ENCODE measurements at regions of chr20 and their contacts with region 1.

Region 1: DNA sequence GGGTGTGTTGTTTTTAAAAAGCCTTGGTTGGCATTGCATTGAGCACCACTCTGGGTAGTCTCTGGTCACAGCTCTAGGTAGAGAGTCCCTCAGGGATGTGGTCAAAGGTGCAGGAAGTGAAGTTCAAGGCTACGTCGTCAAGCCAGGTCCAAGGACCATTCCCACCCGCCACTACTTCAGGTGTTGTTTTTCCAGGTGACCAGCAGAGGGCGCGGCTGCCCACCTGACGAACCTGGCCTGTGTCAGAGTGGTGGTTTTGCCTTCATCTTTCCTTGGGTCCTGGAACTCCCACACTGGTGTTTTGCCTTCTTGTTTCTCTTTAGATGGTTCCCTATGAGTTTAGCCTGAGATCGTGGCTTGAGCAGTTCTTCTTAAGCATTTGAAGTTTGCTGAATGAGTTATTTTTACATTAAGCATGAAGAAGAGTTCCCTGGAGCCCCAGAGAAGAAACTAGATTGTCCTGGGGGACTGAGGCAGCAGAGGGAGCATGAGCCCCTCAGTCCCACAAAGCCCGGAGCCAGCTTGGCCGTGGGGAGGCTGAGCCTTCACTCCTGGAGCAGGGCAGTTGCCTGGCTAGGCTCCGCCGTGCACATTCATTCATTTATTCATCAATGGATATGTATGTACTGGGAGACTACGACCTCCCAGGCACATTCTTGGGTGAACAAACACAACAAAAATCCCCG is 5.6 kb upstream of the PHACTR3 start:
- DNase-seq: peak; percentile 42 to 71
- ATAC-seq: peak; percentile 73 to 94; a peak in 5 of 6 replicates
- H3K4me3 ChIP-seq: no peak overlapping the region
- H3K27ac ChIP-seq: no peak overlapping the region
- H3K4me1 ChIP-seq: no peaks in the 10 kb centered on the region
- CTCF ChIP-seq: peak; percentile 74
- EP300 ChIP-seq: no peak
- POLR2A ChIP-seq: no peak
- RAD21 ChIP-seq: peak; percentile 70 to 82

Region 2: DNA sequence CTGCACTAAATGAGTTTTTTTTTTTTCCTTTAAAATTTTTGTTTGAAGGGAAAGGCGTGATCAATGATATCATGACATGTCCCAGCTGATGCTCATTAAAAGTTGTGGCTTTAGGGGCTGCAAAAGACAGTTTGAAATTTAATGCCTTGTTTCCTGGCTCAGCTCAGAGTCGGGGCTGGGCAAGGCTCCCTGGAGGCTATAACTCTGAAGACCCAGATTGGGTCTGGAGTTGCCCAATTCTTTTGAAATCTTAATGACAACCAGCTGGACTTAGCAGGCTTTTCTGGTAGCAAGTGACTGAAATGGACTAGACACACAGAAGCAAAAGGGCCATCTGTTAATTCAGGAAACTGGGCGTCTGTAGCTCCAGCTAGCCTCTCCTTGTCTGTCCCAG is 18.2 kb before region 1 on chr20:
- CTCF ChIA-PET with region 1: interaction called, 19 read pairs
- POLR2A ChIA-PET with region 1: no interaction called
- DNase-seq: no peak
- ATAC-seq: no peak
- H3K4me3 ChIP-seq: no peak overlapping the region
- H3K27ac ChIP-seq: no peak overlapping the region
- H3K4me1 ChIP-seq: no peaks in the 10 kb centered on the region
- CTCF ChIP-seq: no peak
- EP300 ChIP-seq: no peak
- POLR2A ChIP-seq: no peak
- RAD21 ChIP-seq: no peak

Region 3: DNA sequence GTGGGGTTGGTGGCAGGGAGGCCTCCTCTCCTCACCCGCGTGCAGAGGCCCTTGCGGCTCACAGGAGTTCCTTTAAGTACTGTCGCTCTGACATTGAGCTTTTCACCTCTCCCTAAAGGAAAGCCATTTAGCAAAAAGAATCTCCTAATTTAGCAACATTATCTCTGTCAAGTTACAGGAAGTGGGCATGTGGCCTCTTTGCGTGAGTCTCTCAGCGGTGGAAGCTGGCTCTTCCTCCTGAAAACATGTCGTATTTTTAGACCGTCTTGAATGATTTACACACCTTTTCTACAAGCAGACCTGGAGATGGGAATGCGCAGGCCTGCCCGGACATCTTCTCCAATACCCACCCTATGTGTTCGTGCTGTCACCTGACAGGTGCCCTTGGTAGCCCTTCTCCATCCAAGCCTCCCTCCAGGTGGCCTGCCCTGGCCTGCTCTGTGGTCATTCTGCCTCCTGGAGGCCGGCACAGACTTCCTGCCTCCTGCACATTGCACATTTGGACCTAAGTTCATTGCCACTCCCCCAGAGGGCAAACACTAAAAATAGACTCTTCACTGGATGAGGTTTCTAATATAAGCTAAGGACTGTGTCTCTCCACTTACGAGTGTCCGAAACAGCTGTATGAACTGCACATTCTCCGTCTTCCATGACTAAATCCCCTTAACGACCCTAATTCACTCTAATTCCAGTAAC is 12.9 kb before region 1 on chr20:
- CTCF ChIA-PET with region 1: interaction called, 27 read pairs
- POLR2A ChIA-PET with region 1: no interaction called
- DNase-seq: no peak
- ATAC-seq: no peak
- H3K4me3 ChIP-seq: no peak overlapping the region
- H3K27ac ChIP-seq: no peak overlapping the region
- H3K4me1 ChIP-seq: no peaks in the 10 kb centered on the region
- CTCF ChIP-seq: no peak
- EP300 ChIP-seq: no peak
- POLR2A ChIP-seq: no peak
- RAD21 ChIP-seq: no peak

Region 4: DNA sequence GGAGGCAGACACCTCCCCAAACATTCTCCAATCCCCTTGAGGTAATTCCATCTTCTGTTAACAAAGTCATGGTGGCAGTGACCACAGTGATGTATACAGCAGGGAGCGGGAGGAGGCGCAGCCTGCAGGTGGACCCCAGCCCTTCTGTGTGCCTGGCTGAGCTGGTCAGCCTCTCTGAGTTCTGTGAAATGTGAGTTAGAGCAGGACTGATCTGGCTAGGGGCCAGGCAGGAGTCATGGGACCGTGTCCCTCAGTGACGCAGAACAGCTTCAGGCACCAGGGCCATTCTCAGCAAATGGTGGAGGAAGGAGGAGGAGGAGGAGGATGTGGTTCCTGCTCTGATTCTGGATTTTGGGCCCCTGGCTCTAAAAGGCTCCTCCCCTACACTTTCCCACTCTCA is 12.5 kb after region 1 on chr20:
- CTCF ChIA-PET with region 1: interaction called, 24 read pairs
- POLR2A ChIA-PET with region 1: no interaction called
- DNase-seq: no peak
- ATAC-seq: no peak
- H3K4me3 ChIP-seq: no peak overlapping the region
- H3K27ac ChIP-seq: no peak overlapping the region
- H3K4me1 ChIP-seq: no peaks in the 10 kb centered on the region
- CTCF ChIP-seq: no peak
- EP300 ChIP-seq: no peak
- POLR2A ChIP-seq: no peak
- RAD21 ChIP-seq: no peak

Region 5: DNA sequence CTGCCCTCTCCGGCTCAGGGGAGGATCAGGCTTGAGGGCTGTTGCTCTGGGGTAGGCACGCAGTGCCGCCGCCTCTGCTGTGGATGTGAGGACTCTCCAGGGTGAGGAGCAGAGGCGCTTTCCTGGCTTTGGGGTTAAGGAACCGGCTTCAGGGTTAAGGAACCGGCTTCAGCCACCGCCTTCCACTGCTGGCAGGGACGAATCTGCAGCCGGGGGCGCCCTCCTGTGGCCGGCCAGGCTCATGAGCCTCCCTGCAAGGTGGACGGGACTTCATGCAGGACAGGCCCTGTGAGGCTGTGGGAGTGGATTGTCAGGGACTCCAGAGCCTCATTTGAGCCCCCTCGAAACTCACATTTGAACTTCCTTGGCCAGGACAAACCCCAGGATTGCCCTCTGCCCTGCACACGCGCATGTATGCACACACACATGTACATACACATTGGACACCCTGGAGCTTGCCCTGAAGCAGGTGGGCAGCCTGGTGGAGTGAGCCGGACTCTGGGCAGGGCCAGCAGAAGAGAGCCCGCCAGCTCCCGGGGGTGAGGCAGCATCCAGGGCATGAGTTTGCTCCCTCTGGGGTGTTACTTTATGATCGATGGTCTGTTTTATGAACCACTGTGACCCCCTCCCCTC is 152.4 kb after region 1 on chr20:
- CTCF ChIA-PET with region 1: interaction called, 118 read pairs
- POLR2A ChIA-PET with region 1: no interaction called
- DNase-seq: peak; percentile 68 to 72
- ATAC-seq: peak; percentile 87 to 96
- H3K4me3 ChIP-seq: no peak overlapping the region
- H3K27ac ChIP-seq: no peak overlapping the region
- H3K4me1 ChIP-seq: no peaks in the 10 kb centered on the region
- CTCF ChIP-seq: peak; percentile 63
- EP300 ChIP-seq: no peak
- POLR2A ChIP-seq: no peak
- RAD21 ChIP-seq: peak; percentile 76 to 77